ENCODE measurements at regions of chr14 and their contacts with region 1.

Region 1: DNA sequence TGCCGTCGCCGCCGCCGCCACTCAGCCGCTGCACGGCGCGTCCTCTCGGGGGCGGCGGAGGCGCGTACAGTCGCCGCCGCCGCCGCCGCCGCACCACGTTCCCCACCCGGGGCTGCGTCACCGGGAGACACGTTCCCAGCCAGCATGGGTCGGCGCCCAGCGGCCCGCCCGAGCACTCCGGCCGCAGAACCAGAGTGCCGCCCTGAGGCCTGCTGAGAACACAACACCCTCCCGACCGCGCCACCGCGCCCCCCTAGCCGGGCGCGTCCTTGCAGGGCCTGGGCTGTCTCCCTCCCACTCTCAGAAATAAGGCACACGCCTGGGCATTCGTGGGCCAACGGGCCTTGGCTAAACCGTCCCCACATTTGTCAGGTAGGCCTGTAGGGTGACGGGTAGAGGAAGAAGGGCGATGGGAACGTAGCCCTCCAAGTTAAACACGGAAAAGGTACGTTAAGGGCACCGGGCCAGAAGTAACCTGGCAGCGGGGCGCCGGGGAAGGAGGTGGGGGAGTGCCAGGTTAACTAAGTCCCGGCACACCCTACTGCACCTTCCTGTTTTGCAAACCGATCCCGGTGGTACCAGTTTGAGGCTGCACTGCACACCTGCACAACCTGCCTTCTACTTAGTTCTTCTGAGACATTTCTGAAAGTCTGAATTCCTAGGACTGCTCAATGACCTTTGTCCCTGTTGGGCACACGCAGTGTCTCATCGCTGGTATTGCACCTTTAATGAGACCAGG is at the start of gene MAP4K5:
- DNase-seq: peak; percentile 76 to 90 (median 85)
- ATAC-seq: peak; percentile 97
- H3K4me3 ChIP-seq: peak within 1 kb of the TSS; percentile 50
- H3K4me3 Mint-ChIP-seq: peak within 1 kb of the TSS; percentile 82 to 93 (median 91)
- H3K27ac ChIP-seq: peak within 1 kb of the TSS; percentile 78
- H3K27ac Mint-ChIP-seq: peak within 1 kb of the TSS; percentile 64 to 96 (median 89)
- H3K4me1 ChIP-seq: peaks cover 16 to 24% of the 10 kb centered on the region in 2 donors
- H3K4me1 Mint-ChIP-seq: peaks cover 36 to 59% (median 46%) of the 10 kb centered on the region in 7 donors
- H3K27me3 ChIP-seq: no peaks in the 10 kb centered on the region
- H3K27me3 Mint-ChIP-seq: peaks cover 0 to 21% (median 0%) of the 10 kb centered on the region in 5 donors
- total RNA-seq, gene MAP4K5: 30.0 to 47.5 (median 35.1) TPM

Region 2: GRCh38 chr14:49767562-49768300 is 764.9 kb before region 1 on chr14 and contains the start of gene KLHDC2:
- CTCF ChIA-PET with region 1: no interaction called
- POLR2A ChIA-PET with region 1: interaction called, 3 read pairs
- intact Hi-C with region 1: loop called in 1 of 2 experiments (anchors 2 kb)
- DNase-seq: peak; percentile 84 to 94 (median 89)
- ATAC-seq: peak; percentile 88
- H3K4me3 ChIP-seq: peak within 1 kb of the TSS; percentile 62
- H3K4me3 Mint-ChIP-seq: peak within 1 kb of the TSS; percentile 95 to 99 (median 98)
- H3K27ac ChIP-seq: peak within 1 kb of the TSS; percentile 96
- H3K27ac Mint-ChIP-seq: peak within 1 kb of the TSS; percentile 98 to 100 (median 99)
- H3K4me1 ChIP-seq: peaks cover 26 to 27% of the 10 kb centered on the region in 2 donors
- H3K4me1 Mint-ChIP-seq: peaks cover 20 to 46% (median 40%) of the 10 kb centered on the region in 7 donors
- H3K27me3 ChIP-seq: no peaks in the 10 kb centered on the region
- H3K27me3 Mint-ChIP-seq: peaks cover 0 to 2% (median 0%) of the 10 kb centered on the region in 5 donors
- total RNA-seq, gene KLHDC2: 33.2 to 105 (median 84.7) TPM

Region 3: GRCh38 chr14:50116181-50116956 is 416.3 kb before region 1 on chr14 and contains the start of gene VCPKMT:
- CTCF ChIA-PET with region 1: no interaction called
- POLR2A ChIA-PET with region 1: no interaction called
- intact Hi-C with region 1: loop called (anchors 1 kb)
- DNase-seq: peak; percentile 93 to 97 (median 97)
- ATAC-seq: peak; percentile 99
- H3K4me3 ChIP-seq: peak within 1 kb of the TSS; percentile 74
- H3K4me3 Mint-ChIP-seq: peak within 1 kb of the TSS; percentile 92 to 98 (median 96)
- H3K27ac ChIP-seq: peak within 1 kb of the TSS; percentile 94
- H3K27ac Mint-ChIP-seq: peak within 1 kb of the TSS; percentile 97 to 99 (median 98)
- H3K4me1 ChIP-seq: peaks cover 18 to 20% of the 10 kb centered on the region in 2 donors
- H3K4me1 Mint-ChIP-seq: peaks cover 11 to 37% (median 23%) of the 10 kb centered on the region in 7 donors
- H3K27me3 ChIP-seq: no peaks in the 10 kb centered on the region
- H3K27me3 Mint-ChIP-seq: no peaks in the 10 kb centered on the region
- total RNA-seq, gene VCPKMT: 10.3 to 25.9 (median 17.4) TPM

Region 4: GRCh38 chr14:50321009-50321660 is 211.5 kb before region 1 on chr14:
- CTCF ChIA-PET with region 1: interaction called, 9 read pairs
- POLR2A ChIA-PET with region 1: interaction called, 10 read pairs
- intact Hi-C with region 1: loop called (anchors 1 kb)
- DNase-seq: peak in 8 of 9 donors; percentile 52 to 83 (median 76)
- ATAC-seq: peak; percentile 99
- H3K4me3 ChIP-seq: peak overlapping the region; percentile 15
- H3K4me3 Mint-ChIP-seq: no peak overlapping the region
- H3K27ac ChIP-seq: peak overlapping the region; percentile 11
- H3K27ac Mint-ChIP-seq: no peak overlapping the region
- H3K4me1 ChIP-seq: peaks cover 0 to 4% of the 10 kb centered on the region in 2 donors
- H3K4me1 Mint-ChIP-seq: peaks cover 8 to 34% (median 27%) of the 10 kb centered on the region in 7 donors
- H3K27me3 ChIP-seq: no peaks in the 10 kb centered on the region
- H3K27me3 Mint-ChIP-seq: no peaks in the 10 kb centered on the region

Region 5: DNA sequence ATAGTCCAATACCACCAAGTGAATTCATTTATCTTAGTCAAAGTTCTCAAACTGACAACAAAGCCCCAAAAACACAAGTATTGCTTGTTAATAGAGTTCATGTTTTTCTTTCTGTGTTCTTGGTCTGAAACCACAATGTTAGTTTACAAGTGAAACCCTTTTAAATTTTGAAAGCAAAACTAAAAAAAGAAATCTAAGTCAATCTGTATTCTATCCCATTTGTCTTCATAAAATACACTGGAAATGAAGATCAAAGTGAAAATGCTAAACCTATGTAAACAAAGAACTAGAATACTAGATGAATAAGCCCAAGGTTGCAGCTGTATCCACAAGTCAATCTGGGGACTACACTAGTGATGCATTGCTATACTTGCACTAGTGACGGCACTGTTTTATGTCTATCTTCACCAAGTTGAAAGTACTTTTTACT is 10.7 kb before region 1 on chr14:
- CTCF ChIA-PET with region 1: no interaction called
- POLR2A ChIA-PET with region 1: interaction called, 3 read pairs
- intact Hi-C with region 1: loop called in 1 of 2 experiments (anchors 1 kb)
- DNase-seq: peak in 1 of 9 donors; percentile 11
- ATAC-seq: peak; percentile 39
- H3K4me3 ChIP-seq: no peak overlapping the region
- H3K4me3 Mint-ChIP-seq: peak overlapping the region in 7 of 10 donors; percentile 2 to 77 (median 48)
- H3K27ac ChIP-seq: no peak overlapping the region
- H3K27ac Mint-ChIP-seq: peak overlapping the region in 5 of 9 donors; percentile 14 to 87 (median 45)
- H3K4me1 ChIP-seq: peaks cover 10 to 11% of the 10 kb centered on the region in 2 donors
- H3K4me1 Mint-ChIP-seq: peaks cover 48 to 61% (median 54%) of the 10 kb centered on the region in 7 donors
- H3K27me3 ChIP-seq: no peaks in the 10 kb centered on the region
- H3K27me3 Mint-ChIP-seq: no peaks in the 10 kb centered on the region

Region 6: DNA sequence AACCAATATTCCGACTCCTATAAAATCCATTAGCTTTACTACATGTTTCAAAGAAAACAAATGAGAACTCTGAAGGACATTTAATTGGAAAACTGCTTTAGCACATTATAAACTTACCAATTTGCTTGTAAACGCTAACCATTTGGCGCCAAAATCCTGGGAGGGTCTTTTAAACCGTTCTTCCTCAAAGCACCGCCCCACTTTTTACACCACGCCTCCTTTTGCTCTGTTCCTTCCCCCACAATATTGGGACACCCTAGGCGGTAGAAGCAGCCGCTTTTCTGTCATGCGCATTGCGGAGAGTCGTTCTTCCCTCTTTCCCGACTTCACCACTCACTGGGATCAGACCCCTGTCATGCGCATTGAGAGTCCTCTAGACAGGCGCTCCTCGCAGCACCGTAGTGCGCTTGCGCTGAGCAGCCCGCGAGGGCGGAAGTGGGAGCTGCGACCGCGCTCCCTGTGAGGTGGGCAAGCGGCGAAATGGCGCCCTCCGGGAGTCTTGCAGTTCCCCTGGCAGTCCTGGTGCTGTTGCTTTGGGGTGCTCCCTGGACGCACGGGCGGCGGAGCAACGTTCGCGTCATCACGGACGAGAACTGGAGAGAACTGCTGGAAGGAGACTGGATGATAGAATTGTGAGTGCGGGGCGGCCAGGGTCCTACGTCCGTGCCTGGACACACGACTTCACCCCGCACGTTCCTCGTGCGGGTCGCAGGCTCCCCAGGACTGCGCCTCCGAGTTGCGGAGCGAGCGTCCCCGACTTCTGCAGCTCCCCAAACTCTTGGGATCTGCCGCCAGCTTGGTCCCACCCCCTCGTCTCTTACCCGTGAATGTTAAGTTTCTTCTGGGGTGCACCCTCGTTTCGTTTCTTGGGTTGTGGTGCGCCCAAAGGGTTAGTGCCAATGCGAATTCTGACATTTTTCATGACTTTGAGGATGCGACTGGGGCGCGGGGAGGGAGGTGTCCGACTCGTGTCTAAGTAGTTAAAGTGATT is 707.4 kb after region 1 on chr14 and contains the start of gene TMX1:
- CTCF ChIA-PET with region 1: no interaction called
- POLR2A ChIA-PET with region 1: no interaction called
- intact Hi-C with region 1: loop called in 1 of 2 experiments (anchors 10 kb)
- DNase-seq: peak; percentile 70 to 88 (median 82)
- ATAC-seq: peak; percentile 94
- H3K4me3 ChIP-seq: peak within 1 kb of the TSS; percentile 99
- H3K4me3 Mint-ChIP-seq: no peak within 1 kb of the TSS
- H3K27ac ChIP-seq: peak within 1 kb of the TSS; percentile 81
- H3K27ac Mint-ChIP-seq: no peak within 1 kb of the TSS
- H3K4me1 ChIP-seq: peaks cover 16 to 17% of the 10 kb centered on the region in 2 donors
- H3K4me1 Mint-ChIP-seq: peaks cover 0 to 29% (median 20%) of the 10 kb centered on the region in 7 donors
- H3K27me3 ChIP-seq: no peaks in the 10 kb centered on the region
- H3K27me3 Mint-ChIP-seq: no peaks in the 10 kb centered on the region
- total RNA-seq, gene TMX1: 13.3 to 48.3 (median 23.1) TPM